ENCODE measurements at regions of chr11 and their contacts with region 1.

Region 1: GRCh38 chr11:115672999-115673411 is 168.8 kb upstream of the CADM1 start:
- DNase-seq: peak; percentile 26 to 38
- ATAC-seq: peak; percentile 64 to 87 (median 78)
- H3K4me3 ChIP-seq: no peak overlapping the region
- H3K27ac ChIP-seq: peak overlapping the region in 5 of 10 donors; percentile 12 to 57 (median 40)
- H3K4me1 ChIP-seq: peaks cover 0 to 14% (median 4%) of the 10 kb centered on the region in 9 donors
- H3K27me3 ChIP-seq: peaks cover 0 to 7% (median 0%) of the 10 kb centered on the region in 7 donors
- CTCF ChIP-seq: no peak

Region 2: DNA sequence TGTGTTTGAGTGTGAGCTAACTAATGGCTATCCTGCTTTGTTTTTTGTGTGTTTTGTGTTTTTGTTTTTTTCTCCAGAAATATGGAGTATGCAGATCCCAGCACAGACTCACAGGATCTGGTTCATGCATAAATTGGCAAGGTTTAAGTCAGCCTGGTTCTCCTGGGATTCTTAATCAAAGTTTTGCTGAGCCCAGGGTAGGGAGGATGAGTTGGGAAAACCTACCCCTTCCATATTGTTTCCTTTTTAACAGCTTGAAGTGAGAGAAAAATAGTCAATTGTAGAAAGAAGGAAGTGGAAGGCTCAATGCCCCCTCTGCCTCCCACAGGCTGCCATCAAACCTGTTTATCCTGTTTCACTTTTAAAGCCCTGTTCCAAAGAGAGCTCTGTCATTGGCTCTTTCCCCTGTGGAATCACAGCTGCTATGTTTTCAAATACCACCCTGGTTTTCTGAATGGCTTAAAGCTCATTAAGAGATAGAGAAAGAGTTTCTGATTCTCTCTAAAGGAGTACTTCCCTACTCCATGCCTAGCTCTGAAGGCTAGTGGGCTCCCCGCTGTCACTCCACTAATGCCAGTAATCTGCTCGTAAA is 145.4 kb before region 1 on chr11:
- intact Hi-C with region 1: loop called in 1 of 10 experiments (anchors 10 kb)
- DNase-seq: no peak
- ATAC-seq: no peak
- H3K4me3 ChIP-seq: no peak overlapping the region
- H3K27ac ChIP-seq: no peak overlapping the region
- H3K4me1 ChIP-seq: peaks cover 0 to 13% (median 3%) of the 10 kb centered on the region in 9 donors
- H3K27me3 ChIP-seq: peaks cover 0 to 13% (median 0%) of the 10 kb centered on the region in 7 donors
- CTCF ChIP-seq: no peak

Region 3: DNA sequence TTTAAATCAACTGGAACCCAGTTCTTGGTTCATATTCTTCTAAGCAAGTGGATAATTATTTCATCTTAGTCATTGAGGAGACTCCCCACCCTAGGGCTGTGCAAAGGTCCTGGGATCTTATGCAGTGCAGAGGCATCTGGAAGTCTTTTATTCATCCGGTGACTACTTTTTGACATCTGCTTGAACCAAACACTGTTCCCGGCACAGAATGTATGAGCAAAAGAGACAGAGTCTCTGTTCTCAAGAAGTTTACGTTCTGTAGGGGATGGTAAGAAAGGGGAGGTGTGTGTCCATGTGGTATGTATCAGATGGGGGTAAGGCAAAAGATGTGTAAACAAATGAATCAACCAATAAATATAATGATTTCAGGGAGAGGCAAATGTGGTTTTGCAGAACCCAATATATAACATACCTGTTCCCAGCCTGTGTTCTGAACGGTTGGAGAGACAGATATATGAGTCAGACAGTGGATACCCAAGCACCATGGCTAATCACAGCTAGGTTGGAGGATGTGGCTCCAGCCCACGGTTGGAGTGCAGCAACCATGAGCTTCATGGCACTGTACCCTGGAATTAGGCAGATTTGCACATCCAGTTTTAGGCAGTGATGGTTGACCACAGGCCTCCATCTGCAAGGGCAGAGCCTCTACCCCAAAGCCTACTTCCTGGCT is 93.7 kb before region 1 on chr11:
- intact Hi-C with region 1: no loop called
- DNase-seq: no peak
- ATAC-seq: no peak
- H3K4me3 ChIP-seq: no peak overlapping the region
- H3K27ac ChIP-seq: no peak overlapping the region
- H3K4me1 ChIP-seq: peaks cover 0 to 18% (median 7%) of the 10 kb centered on the region in 9 donors
- H3K27me3 ChIP-seq: no peaks in the 10 kb centered on the region
- CTCF ChIP-seq: no peak